Ovary (tissue), 10 donors: ENCODE measurements at regions of chr22 and their contacts with region 1.

Region 1: DNA sequence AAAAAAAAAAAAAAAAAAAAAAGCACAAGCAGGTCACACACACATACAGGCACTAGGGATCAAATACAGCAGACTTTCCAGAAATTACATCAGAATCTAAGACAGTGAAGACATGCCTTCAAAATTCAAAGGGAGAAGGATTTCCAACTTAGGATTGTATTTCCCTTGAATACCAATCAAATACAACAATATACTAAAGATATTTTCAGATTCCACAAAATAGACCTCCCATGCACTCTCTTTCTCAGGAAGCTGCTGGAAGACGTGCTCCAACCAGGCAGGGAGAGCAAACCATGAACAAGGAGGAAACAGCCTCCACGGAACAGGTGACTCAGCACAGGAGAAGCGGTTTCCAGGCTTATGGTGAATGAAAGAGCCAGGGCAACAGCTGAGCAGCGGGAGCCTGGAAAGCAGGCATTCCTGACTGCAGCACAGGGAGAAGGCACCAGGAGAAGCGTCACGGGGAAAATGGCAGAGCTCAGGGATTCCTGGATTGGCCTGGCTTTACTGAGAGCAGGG is 32.0 kb downstream of the TMEM184B start:
- DNase-seq: peak in 2 of 5 donors; percentile 50 to 51
- H3K4me3 ChIP-seq: no peak overlapping the region
- H3K27ac ChIP-seq: peak overlapping the region in 1 of 2 donors; percentile 5
- H3K4me1 ChIP-seq: peaks cover 20% of the 10 kb centered on the region
- H3K27me3 ChIP-seq: no peaks in the 10 kb centered on the region
- CTCF ChIP-seq: no peak
- EP300 ChIP-seq: no peak
- POLR2A ChIP-seq: no peak

Region 2: DNA sequence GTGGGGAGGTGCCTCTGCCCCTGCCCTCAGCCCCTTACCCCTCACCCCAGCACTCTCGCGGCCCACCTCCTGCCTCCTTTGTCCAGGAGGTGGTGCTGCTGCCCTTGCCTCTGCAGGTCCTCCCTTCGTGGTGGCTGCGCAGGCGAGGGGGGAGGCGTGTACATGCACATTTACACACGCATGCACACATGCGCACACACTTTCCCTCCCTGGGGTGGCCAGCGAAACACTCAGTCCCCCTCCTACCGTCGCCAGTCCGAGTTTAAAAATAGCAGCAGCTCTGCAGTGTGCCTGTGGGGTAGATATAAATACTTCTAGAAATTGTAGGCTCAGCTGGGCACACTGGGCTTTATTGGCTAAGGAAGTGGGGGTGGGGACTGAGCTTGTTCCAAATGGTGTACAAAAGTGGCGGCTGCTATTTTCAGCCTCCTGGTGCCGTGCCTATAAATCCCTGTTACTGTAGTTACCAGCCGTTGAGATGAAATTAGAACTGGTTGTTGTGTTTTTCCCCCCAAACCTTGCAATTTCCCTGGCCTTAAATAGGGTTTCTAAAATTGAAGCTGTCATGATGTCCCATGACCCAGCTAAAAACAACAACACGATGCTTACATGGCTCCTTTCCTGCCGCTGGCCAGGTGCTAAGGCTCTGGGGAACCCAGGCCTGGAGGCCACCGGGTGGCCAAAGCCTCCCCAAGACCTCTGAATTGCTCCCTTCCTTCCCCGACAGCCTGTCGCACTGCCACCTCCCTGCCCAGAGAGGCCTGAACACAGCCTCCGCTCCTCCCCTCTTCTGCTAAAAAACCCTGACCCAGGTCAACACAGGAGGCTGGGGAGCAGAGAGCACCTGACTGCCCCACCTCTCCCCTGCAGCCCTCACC is 171.2 kb before region 1 on chr22:
- intact Hi-C with region 1: loop called in 1 of 4 experiments (anchors 10 kb)
- DNase-seq: peak in 3 of 5 donors; percentile 48 to 62 (median 52)
- H3K4me3 ChIP-seq: no peak overlapping the region
- H3K27ac ChIP-seq: peak overlapping the region in 1 of 2 donors; percentile 50
- H3K4me1 ChIP-seq: no peaks in the 10 kb centered on the region
- H3K27me3 ChIP-seq: no peaks in the 10 kb centered on the region
- CTCF ChIP-seq: peak in 1 of 3 donors; percentile 20
- EP300 ChIP-seq: no peak
- POLR2A ChIP-seq: no peak

Region 3: GRCh38 chr22:38289583-38290082 is 48.8 kb after region 1 on chr22:
- intact Hi-C with region 1: loop called in 1 of 4 experiments (anchors 5 kb)
- DNase-seq: peak in 2 of 5 donors; percentile 46 to 59
- H3K4me3 ChIP-seq: no peak overlapping the region
- H3K27ac ChIP-seq: peak overlapping the region in 1 of 2 donors; percentile 12
- H3K4me1 ChIP-seq: no peaks in the 10 kb centered on the region
- H3K27me3 ChIP-seq: no peaks in the 10 kb centered on the region
- CTCF ChIP-seq: no peak
- EP300 ChIP-seq: no peak
- POLR2A ChIP-seq: no peak